ENCODE measurements at regions of chr17 and their contacts with region 1.

Region 1: DNA sequence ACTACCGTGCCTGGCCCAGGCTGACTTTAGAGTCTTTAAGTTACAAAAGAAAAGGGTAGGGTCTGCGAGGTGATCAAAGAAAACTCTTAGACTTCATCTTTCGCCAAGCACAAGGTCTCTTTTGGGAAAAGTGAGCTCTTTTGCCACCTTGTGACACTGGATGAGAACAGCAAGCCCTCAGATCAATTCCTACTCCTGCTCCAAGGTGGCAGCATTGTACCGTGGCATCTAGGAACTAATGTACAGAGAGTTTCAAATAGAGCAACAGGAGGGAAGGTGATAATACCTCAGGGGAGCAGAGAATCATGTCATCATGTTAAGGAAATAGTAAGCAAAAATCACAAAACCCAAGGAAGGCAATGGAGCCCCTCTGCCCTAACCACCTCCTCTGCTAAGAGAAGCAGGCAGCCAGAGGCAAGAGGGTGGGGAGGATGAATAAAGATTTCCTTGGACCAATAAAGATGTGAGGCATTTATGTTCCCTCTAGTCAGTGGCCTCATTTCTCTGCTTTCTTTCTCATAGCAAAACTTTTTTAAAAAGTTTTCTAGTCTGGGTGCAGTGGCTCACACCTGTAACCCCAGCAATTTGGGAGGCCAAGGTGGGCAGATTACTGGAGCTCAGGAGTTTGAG is 2.1 kb upstream of the C17orf78 start:
- DNase-seq: peak; percentile 84 to 91 (median 85)
- H3K4me3 ChIP-seq: no peak overlapping the region
- H3K27ac ChIP-seq: no peak overlapping the region
- H3K4me1 ChIP-seq: no peaks in the 10 kb centered on the region
- H3K27me3 ChIP-seq: no peaks in the 10 kb centered on the region

Region 2: DNA sequence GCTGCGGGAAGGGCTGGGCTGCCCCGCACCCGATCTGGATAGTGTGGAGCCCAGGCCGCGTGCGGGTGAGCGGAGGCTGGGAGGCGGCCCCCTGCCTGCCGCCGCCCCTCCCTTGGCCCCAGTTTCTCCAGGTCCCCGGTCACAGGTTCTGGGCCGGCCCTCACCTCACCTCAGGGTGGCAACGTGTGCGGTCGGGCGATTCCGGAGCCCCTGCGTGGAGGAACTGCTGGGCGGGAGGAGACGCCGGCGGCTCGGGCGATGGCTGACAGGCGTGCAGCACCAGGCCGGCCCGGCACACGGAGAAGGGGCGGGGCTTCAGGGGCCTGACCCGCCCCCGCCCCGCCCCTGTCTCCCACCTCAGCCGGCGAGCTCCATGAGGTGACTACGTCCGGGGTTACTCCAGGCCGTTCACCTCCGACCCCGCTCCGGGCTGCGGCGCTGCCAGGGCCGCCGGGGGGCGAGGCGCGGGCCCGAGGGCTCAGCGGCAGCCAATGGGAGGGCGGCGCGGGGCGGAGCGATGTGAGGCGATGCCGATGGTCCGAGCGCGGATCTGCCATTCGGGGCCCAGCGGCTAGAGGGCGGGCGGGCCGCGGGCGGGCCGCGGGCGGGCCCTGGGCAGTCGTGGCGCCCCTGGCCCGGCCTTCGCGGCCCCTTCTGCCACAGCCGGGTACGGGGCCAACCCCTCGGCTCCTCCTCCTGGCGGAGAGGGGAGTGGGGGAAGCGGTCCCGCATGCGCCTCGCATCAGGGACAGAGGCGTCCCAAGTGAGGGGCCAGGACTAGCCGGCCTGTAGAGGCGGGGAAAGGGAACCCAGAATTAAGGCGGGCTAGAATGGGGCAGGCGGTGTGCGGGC is 14.6 kb before region 1 on chr17:
- CTCF ChIA-PET with region 1: interaction called, 17 read pairs
- POLR2A ChIA-PET with region 1: no interaction called
- DNase-seq: peak; percentile 94 to 97 (median 96)
- H3K4me3 ChIP-seq: peak overlapping the region; percentile 57 to 97 (median 84)
- H3K27ac ChIP-seq: peak overlapping the region in 1 of 2 experiments; percentile 74
- H3K4me1 ChIP-seq: peaks cover 7 to 34% (median 22%) of the 10 kb centered on the region in 4 experiments
- H3K27me3 ChIP-seq: no peaks in the 10 kb centered on the region

Region 3: GRCh38 chr17:37392024-37392590 is 18.5 kb after region 1 on chr17:
- CTCF ChIA-PET with region 1: interaction called, 35 read pairs
- POLR2A ChIA-PET with region 1: no interaction called
- DNase-seq: no peak
- H3K4me3 ChIP-seq: no peak overlapping the region
- H3K27ac ChIP-seq: no peak overlapping the region
- H3K4me1 ChIP-seq: no peaks in the 10 kb centered on the region
- H3K27me3 ChIP-seq: no peaks in the 10 kb centered on the region

Region 4: DNA sequence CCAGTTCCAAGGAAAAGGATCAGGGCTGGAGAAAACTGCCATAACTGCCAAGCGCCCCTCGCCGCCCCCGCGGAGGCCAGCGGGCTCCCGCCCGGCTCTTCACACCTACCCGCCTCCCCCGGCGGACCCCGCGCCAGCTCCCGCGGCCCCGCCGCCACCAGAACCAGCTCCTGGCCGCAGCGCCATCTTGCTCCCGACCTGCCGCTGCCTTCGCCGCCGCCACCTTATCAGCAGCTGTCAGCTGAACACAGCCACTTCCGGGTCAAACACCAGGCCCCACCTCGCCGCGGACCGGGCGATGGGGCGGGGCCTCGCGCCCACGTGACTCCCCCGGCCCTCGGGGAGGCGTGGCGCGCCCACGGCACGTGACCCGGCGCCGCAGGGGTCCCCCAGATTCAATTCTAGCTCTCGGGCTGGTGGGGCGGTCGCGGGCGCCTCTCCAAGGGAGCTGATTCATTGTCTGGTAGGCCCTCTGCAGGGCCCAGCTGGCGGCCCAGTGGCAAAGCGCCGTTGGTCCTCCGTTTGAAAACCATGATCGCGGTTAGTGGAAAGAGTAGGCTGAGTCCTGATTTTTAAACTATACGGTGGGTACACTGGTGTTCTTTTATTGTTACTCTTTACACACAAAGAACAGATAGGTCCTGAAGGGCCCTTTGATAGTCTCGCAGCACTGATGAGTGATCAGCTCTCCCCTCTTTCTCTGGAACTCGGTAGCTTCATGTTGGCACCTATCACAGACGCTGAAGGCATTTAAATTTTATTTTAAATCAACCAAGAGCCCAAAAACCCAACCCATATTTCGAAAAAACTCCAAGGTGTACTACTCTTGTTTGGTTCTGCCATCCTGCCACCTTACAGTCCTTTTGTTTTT is 235.8 kb after region 1 on chr17 and contains the start of gene SYNRG:
- CTCF ChIA-PET with region 1: no interaction called
- POLR2A ChIA-PET with region 1: no interaction called
- DNase-seq: peak; percentile 96 to 99 (median 98)
- H3K4me3 ChIP-seq: peak within 1 kb of the TSS; percentile 83 to 94 (median 89)
- H3K27ac ChIP-seq: peak within 1 kb of the TSS; percentile 78 to 88
- H3K4me1 ChIP-seq: peaks cover 21 to 43% (median 32%) of the 10 kb centered on the region in 4 experiments
- H3K27me3 ChIP-seq: no peaks in the 10 kb centered on the region